Dorsolateral prefrontal cortex (tissue), 120 donors: ENCODE measurements at regions of chr19 and their contacts with region 1.

Region 1: DNA sequence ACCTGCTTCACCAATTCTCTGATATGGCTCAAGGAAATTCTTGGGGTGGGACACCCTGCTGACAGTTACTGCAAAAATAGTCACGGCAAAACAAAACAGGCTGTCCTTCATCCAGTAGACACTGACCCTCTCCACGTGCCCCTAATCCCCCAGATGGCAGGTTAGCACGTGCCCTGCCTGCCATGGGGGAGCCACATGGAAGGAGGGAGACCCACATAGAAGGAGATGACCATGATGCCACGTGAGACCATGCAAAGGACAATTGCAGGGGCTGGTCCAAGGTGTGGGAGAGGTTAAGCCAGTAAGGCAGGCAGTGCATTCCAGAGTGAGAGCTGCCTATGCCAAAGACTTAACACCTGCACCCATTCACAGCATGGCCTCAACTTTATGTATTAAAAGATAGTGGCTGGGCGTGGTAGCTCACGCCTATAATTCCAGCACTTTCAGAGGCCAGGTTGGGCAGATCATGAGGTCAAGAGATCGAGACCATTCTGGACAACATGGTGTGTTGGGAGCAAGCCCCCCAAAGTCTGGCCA is 82.7 kb downstream of the ZNF429 start:
- DNase-seq: no peak
- H3K4me3 ChIP-seq: no peak overlapping the region
- H3K27ac ChIP-seq: peak overlapping the region in 1 of 59 donors; percentile 37
- H3K27me3 ChIP-seq: peaks cover 0 to 36% (median 18%) of the 10 kb centered on the region in 45 donors
- CTCF ChIP-seq: no peak

Region 2: GRCh38 chr19:21519488-21519887 is 68.6 kb before region 1 on chr19:
- intact Hi-C with region 1: loop called in 1 of 2 experiments (anchors 2 kb)
- DNase-seq: no peak
- H3K4me3 ChIP-seq: no peak overlapping the region
- H3K27ac ChIP-seq: no peak overlapping the region
- H3K27me3 ChIP-seq: no peaks in the 10 kb centered on the region
- CTCF ChIP-seq: no peak